Caco-2 (cell line): ENCODE measurements at regions of chr5 and their contacts with region 1.

Region 1: GRCh38 chr5:68661237-68661636 is 432.6 kb upstream of the SLC30A5 start:
- DNase-seq: peak in 1 of 2 experiments; percentile 24
- H3K4me3 ChIP-seq: no peak overlapping the region
- H3K4me3 Mint-ChIP-seq: no peak overlapping the region
- H3K27ac Mint-ChIP-seq: no peak overlapping the region
- H3K4me1 ChIP-seq: no peaks in the 10 kb centered on the region
- H3K4me1 Mint-ChIP-seq: no peaks in the 10 kb centered on the region
- H3K27me3 ChIP-seq: no peaks in the 10 kb centered on the region
- H3K27me3 Mint-ChIP-seq: no peaks in the 10 kb centered on the region
- CTCF ChIP-seq: peak; percentile 38 to 50

Region 2: GRCh38 chr5:68460147-68460798 is 201.0 kb before region 1 on chr5:
- CTCF ChIA-PET with region 1: no interaction called
- POLR2A ChIA-PET with region 1: no interaction called
- intact Hi-C with region 1: loop called (anchors 10 kb)
- DNase-seq: peak in 1 of 2 experiments; percentile 28
- H3K4me3 ChIP-seq: no peak overlapping the region
- H3K4me3 Mint-ChIP-seq: no peak overlapping the region
- H3K27ac Mint-ChIP-seq: no peak overlapping the region
- H3K4me1 ChIP-seq: peaks cover 22% of the 10 kb centered on the region
- H3K4me1 Mint-ChIP-seq: no peaks in the 10 kb centered on the region
- H3K27me3 ChIP-seq: no peaks in the 10 kb centered on the region
- H3K27me3 Mint-ChIP-seq: no peaks in the 10 kb centered on the region
- CTCF ChIP-seq: peak; percentile 30 to 52